Activated T-helper 1 cell treated with anti-CD3 and anti-CD28 coated beads, Interleukin-12 subunit alpha, Interleukin-12 subunit beta, Interleukin-2, Interleukin-4 antibody, amounts not matched to agents 30 ng/mL and 10 ng/mL and 1 ng/mL, durations not matched to agents 14 hours and 24 hours and 36 hours (primary cell): ENCODE measurements at regions of chr2 and their contacts with region 1.

Region 1: DNA sequence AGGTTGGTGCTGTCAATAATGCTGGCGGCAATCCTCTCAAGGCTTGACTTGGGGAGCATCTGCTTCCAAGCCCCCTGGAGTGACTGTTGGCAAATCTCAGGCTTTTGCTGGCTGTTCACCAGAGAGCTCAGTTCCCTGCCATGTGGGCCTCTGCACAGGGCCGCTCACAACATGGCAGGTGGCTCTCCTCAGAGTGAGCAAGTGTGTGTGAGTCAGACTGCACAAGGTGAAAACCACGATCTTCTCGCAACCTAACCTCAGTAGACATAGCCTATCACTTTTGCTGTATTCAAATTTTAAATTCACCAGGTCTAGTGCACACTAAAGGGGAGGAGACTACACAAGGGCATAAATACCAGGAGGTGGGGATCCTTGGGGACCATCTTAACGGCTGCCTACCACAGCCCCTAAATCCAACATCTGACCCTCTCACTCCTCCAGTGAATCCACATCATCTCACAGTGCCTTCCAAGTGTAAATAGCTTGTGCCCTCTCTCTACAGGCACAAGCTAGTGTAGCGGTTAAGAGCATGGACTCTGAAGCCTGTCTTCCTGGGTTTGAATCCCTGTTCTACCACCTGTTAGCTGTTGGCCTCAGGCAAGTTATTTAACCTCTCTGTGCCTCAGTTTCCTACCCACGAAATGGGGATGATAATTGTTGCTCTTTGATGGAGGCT is 187.7 kb upstream of the CXCR4 start:
- DNase-seq: peak; percentile 47
- H3K4me3 Mint-ChIP-seq: no peak overlapping the region
- H3K27ac Mint-ChIP-seq: peak overlapping the region; percentile 70
- H3K4me1 Mint-ChIP-seq: peaks cover 34% of the 10 kb centered on the region
- H3K27me3 Mint-ChIP-seq: peaks cover 2% of the 10 kb centered on the region

Region 2: GRCh38 chr2:135913727-135914365 is 391.8 kb before region 1 on chr2:
- intact Hi-C with region 1: loop called (anchors 5 kb)
- DNase-seq: no peak
- H3K4me3 Mint-ChIP-seq: no peak overlapping the region
- H3K27ac Mint-ChIP-seq: no peak overlapping the region
- H3K4me1 Mint-ChIP-seq: peaks cover 27% of the 10 kb centered on the region
- H3K27me3 Mint-ChIP-seq: no peaks in the 10 kb centered on the region

Region 3: GRCh38 chr2:136168720-136169119 is 136.9 kb before region 1 on chr2:
- intact Hi-C with region 1: no loop called
- DNase-seq: no peak
- H3K4me3 Mint-ChIP-seq: no peak overlapping the region
- H3K27ac Mint-ChIP-seq: no peak overlapping the region
- H3K4me1 Mint-ChIP-seq: peaks cover 5% of the 10 kb centered on the region
- H3K27me3 Mint-ChIP-seq: peaks cover 6% of the 10 kb centered on the region

Region 4: DNA sequence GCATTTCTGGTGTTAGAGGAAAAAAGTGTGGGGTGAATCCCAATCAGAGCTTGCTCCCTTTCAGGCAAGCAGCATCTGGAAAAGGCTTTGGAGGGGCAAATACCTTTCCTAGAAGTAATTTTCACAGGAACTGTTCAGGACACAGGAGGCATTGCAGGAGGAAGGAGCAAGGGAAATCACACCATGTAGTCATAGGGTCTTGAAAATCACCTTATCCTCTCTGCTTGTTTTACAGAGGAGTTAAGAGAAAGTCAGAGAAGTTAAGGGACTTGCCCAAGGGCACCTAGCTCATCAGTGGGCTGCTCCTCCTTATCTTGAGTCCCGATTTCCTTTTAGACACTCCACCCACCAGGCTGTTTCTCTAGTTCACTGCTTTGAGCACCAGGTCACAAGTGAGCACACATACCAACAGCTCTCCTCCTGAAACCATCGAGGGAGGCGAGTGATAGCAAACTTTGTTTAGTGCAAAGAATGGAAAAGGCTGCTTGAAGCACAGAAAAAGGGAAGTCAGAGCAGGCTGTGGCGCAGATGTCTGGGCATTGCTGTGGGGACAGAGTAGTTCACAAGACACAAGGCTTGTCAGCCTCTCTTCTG is 98.5 kb before region 1 on chr2:
- intact Hi-C with region 1: loop called (anchors 2 kb)
- DNase-seq: no peak
- H3K4me3 Mint-ChIP-seq: no peak overlapping the region
- H3K27ac Mint-ChIP-seq: peak overlapping the region; percentile 92
- H3K4me1 Mint-ChIP-seq: peaks cover 33% of the 10 kb centered on the region
- H3K27me3 Mint-ChIP-seq: peaks cover 2% of the 10 kb centered on the region

Region 5: GRCh38 chr2:136281281-136282114 is 24.2 kb before region 1 on chr2:
- intact Hi-C with region 1: loop called (anchors 2 kb)
- DNase-seq: peak; percentile 56
- H3K4me3 Mint-ChIP-seq: peak overlapping the region; percentile 38
- H3K27ac Mint-ChIP-seq: peak overlapping the region; percentile 81
- H3K4me1 Mint-ChIP-seq: peaks cover 67% of the 10 kb centered on the region
- H3K27me3 Mint-ChIP-seq: no peaks in the 10 kb centered on the region

Region 6: GRCh38 chr2:136404176-136404575 is 98.5 kb after region 1 on chr2:
- intact Hi-C with region 1: no loop called
- DNase-seq: no peak
- H3K4me3 Mint-ChIP-seq: no peak overlapping the region
- H3K27ac Mint-ChIP-seq: no peak overlapping the region
- H3K4me1 Mint-ChIP-seq: no peaks in the 10 kb centered on the region
- H3K27me3 Mint-ChIP-seq: peaks cover 40% of the 10 kb centered on the region

Region 7: GRCh38 chr2:136693966-136694365 is 388.3 kb after region 1 on chr2:
- intact Hi-C with region 1: loop called (anchors 5 kb)
- DNase-seq: no peak
- H3K4me3 Mint-ChIP-seq: no peak overlapping the region
- H3K27ac Mint-ChIP-seq: no peak overlapping the region
- H3K4me1 Mint-ChIP-seq: no peaks in the 10 kb centered on the region
- H3K27me3 Mint-ChIP-seq: no peaks in the 10 kb centered on the region

Region 8: GRCh38 chr2:136823291-136823690 is 517.6 kb after region 1 on chr2:
- intact Hi-C with region 1: no loop called
- DNase-seq: no peak
- H3K4me3 Mint-ChIP-seq: no peak overlapping the region
- H3K27ac Mint-ChIP-seq: no peak overlapping the region
- H3K4me1 Mint-ChIP-seq: no peaks in the 10 kb centered on the region
- H3K27me3 Mint-ChIP-seq: no peaks in the 10 kb centered on the region

Region 9: GRCh38 chr2:137287936-137288639 is 982.4 kb after region 1 on chr2:
- intact Hi-C with region 1: no loop called
- DNase-seq: no peak
- H3K4me3 Mint-ChIP-seq: no peak overlapping the region
- H3K27ac Mint-ChIP-seq: no peak overlapping the region
- H3K4me1 Mint-ChIP-seq: no peaks in the 10 kb centered on the region
- H3K27me3 Mint-ChIP-seq: no peaks in the 10 kb centered on the region